Pancreas (tissue), 10 donors: ENCODE measurements at regions of chr5 and their contacts with region 1.

Region 1: DNA sequence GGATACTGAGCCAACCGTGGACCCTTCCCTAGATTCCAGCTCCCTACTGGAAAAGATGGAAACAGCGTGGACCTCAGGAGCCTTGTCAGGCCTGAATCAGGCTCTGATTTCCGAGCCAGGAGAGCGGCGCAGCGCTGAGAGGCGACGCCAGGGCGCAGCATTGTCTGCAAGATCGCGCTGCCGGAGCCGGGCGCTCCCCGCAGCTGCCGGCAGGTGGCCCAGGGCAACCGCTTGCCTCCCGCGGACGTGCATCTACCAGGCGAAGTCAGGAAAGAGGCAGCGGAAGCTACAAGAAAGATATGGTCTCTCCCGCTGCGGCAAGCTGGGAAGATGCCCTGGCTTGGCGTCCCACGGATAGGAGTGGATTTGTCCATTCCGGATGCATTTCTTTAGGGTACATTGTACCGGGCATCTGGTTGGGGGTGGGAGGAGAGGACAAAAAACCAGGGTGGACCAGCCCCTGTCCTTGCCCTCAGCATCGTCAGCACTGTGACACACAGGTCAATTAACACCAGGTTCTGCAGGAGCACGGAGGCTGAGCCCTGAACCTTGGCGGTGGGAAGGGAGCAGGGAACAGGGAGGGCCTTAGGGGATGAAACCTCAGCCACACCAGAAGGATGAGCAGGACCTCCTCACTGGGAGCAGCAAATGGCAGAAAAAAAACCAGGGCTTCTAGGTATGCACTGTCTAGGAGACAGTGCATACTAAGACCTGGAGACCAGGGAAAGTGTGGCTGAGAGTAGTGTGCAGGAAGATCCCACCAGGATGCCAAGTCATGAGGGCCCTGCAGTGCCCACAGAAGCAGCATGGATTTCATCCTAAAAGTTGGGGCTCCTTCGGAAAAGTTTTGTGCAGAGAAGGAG is 55.9 kb downstream of the SFXN1 start:
- DNase-seq: peak; percentile 59 to 94 (median 76)
- ATAC-seq: peak; percentile 97 to 100 (median 100)
- H3K4me3 ChIP-seq: no peak overlapping the region
- H3K27ac ChIP-seq: no peak overlapping the region
- H3K4me1 ChIP-seq: no peaks in the 10 kb centered on the region
- H3K27me3 ChIP-seq: no peaks in the 10 kb centered on the region
- CTCF ChIP-seq: peak; percentile 80 to 99 (median 94)

Region 2: DNA sequence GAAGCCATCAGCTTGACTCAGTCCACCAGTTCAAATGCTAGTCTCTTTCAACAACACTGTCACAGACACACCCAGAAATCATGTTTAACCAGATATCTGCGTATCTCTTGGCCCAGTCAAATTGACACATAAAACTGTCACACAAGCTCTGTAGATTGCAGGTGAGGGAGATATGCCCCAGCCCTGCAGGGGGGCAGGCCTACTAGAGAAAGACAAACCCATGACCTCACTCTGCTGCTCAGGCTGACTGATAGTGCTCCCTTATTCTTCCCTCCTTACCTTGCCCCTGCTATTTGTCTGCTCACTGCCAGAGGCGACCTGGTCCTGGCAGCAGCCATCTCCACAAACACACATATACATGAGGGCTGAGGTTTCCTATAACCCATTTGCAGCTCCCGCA is 441.6 kb before region 1 on chr5:
- intact Hi-C with region 1: no loop called
- DNase-seq: no peak
- ATAC-seq: no peak
- H3K4me3 ChIP-seq: no peak overlapping the region
- H3K27ac ChIP-seq: no peak overlapping the region
- H3K4me1 ChIP-seq: no peaks in the 10 kb centered on the region
- H3K27me3 ChIP-seq: no peaks in the 10 kb centered on the region
- CTCF ChIP-seq: no peak

Region 3: GRCh38 chr5:175718401-175719108 is 184.3 kb after region 1 on chr5:
- intact Hi-C with region 1: loop called in 1 of 3 experiments (anchors 5 kb)
- DNase-seq: peak in 5 of 6 donors; percentile 21 to 84 (median 46)
- ATAC-seq: peak; percentile 64 to 92 (median 77)
- H3K4me3 ChIP-seq: no peak overlapping the region
- H3K27ac ChIP-seq: no peak overlapping the region
- H3K4me1 ChIP-seq: peaks cover 0 to 10% (median 8%) of the 10 kb centered on the region in 3 donors
- H3K27me3 ChIP-seq: no peaks in the 10 kb centered on the region
- CTCF ChIP-seq: peak; percentile 43 to 72 (median 56)